Adrenal gland (tissue), 19 donors: ENCODE measurements at regions of chr2 and their contacts with region 1.

Region 1: GRCh38 chr2:127422810-127423475 is 4.7 kb downstream of the PROC start:
- DNase-seq: peak in 1 of 7 donors; percentile 47
- H3K4me3 ChIP-seq: peak overlapping the region in 1 of 4 donors; percentile 42
- H3K27ac ChIP-seq: no peak overlapping the region
- H3K4me1 ChIP-seq: peaks cover 10 to 16% of the 10 kb centered on the region in 2 donors
- H3K27me3 ChIP-seq: peaks cover 21% of the 10 kb centered on the region
- CTCF ChIP-seq: no peak
- POLR2A ChIP-seq: no peak

Region 2: DNA sequence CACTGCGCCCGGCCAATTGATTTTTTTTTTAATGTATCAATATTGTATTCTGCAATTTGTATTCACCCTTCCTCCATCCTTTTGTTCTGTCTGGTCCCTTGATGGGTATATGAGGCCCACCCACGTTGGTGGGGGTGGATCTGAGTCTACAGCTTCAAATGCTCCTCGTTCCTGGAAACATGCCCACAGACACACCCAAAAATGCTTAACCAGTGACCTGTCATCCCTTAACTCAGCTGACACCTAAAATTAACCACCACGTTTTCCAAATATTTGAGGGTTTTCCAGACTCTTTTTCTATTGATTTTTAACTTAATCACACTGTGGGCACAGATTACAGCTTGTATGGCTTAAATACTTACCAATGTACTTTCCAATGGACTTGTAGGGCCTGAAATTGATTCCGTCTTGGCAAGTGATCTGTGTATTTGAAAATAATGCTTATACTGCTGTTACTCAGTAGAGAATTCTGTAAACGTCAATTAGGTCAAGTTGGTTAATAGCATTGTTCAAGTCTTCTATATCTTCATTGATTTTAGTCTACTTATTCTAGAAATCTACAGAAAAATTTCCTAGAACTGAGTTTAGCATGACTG is 168.5 kb before region 1 on chr2:
- intact Hi-C with region 1: no loop called
- DNase-seq: no peak
- H3K4me3 ChIP-seq: no peak overlapping the region
- H3K27ac ChIP-seq: no peak overlapping the region
- H3K4me1 ChIP-seq: no peaks in the 10 kb centered on the region
- H3K27me3 ChIP-seq: no peaks in the 10 kb centered on the region
- CTCF ChIP-seq: no peak
- POLR2A ChIP-seq: no peak

Region 3: GRCh38 chr2:127324635-127325034 is 98.3 kb before region 1 on chr2:
- intact Hi-C with region 1: loop called (anchors 5 kb)
- DNase-seq: peak in 5 of 7 donors; percentile 20 to 57 (median 39)
- H3K4me3 ChIP-seq: no peak overlapping the region
- H3K27ac ChIP-seq: no peak overlapping the region
- H3K4me1 ChIP-seq: no peaks in the 10 kb centered on the region
- H3K27me3 ChIP-seq: no peaks in the 10 kb centered on the region
- CTCF ChIP-seq: peak in 5 of 6 experiments; percentile 61 to 73 (median 70)
- POLR2A ChIP-seq: no peak

Region 4: DNA sequence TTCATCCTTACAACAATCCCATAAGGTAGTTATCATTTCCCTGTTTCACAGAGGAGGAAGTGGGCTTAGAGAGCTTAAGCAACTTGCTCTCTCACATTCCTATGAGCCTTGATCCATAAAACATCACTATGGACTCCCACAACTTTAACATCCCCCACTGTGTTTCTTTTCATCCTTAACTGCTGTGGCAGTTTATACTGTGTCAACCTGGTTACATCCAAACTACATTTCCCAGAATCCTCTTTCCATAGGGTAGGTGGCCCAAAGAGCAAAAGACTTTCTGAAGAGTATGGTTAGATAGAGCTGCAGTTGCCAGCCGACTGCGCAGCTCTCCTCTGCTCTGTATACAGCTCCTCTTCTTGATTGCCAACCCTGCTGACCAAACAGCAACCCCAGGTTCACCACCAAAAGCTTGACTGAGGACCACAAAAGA is 57.7 kb before region 1 on chr2:
- intact Hi-C with region 1: loop called in 1 of 2 experiments (anchors 2 kb)
- DNase-seq: no peak
- H3K4me3 ChIP-seq: no peak overlapping the region
- H3K27ac ChIP-seq: no peak overlapping the region
- H3K4me1 ChIP-seq: peaks cover 0 to 22% of the 10 kb centered on the region in 2 donors
- H3K27me3 ChIP-seq: no peaks in the 10 kb centered on the region
- CTCF ChIP-seq: no peak
- POLR2A ChIP-seq: no peak

Region 5: GRCh38 chr2:127392133-127392827 is 30.7 kb before region 1 on chr2:
- intact Hi-C with region 1: loop called in 1 of 2 experiments (anchors 2 kb)
- DNase-seq: no peak
- H3K4me3 ChIP-seq: no peak overlapping the region
- H3K27ac ChIP-seq: no peak overlapping the region
- H3K4me1 ChIP-seq: peaks cover 0 to 6% of the 10 kb centered on the region in 2 donors
- H3K27me3 ChIP-seq: no peaks in the 10 kb centered on the region
- CTCF ChIP-seq: no peak
- POLR2A ChIP-seq: no peak

Region 6: DNA sequence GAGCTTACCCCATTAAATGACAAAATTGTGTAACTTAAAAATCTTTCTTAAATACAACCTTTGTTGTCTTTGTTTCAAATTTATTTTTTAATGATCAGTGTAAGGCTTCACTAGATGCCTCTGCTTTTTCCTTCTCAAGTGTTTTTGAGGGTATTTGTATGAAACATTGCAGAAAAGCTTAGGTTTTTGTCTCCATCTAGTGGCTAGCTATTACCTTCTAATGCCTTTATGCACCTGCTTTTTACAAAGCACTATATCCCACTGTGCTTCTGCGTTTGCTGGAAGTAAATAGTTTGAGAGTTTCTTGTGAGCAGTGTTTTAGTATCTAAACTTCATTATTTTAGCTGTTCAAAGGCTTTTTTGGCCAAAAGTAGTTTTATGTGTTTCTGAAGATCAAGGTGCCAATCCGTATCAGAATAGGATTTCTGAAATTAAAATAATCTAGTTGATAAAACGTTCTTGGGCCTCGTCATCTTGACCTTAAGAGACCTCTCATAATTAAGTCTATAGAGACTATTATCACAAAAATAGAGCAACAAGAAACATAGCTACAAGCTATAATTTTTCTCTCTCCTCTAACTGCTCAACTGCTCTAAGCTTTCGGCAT is 56.4 kb after region 1 on chr2:
- intact Hi-C with region 1: loop called (anchors 5 to 10 kb)
- DNase-seq: no peak
- H3K4me3 ChIP-seq: no peak overlapping the region
- H3K27ac ChIP-seq: no peak overlapping the region
- H3K4me1 ChIP-seq: no peaks in the 10 kb centered on the region
- H3K27me3 ChIP-seq: no peaks in the 10 kb centered on the region
- CTCF ChIP-seq: peak; percentile 29 to 74 (median 70)
- POLR2A ChIP-seq: no peak